ENCODE measurements at regions of chr6 and their contacts with region 1.

Region 1: DNA sequence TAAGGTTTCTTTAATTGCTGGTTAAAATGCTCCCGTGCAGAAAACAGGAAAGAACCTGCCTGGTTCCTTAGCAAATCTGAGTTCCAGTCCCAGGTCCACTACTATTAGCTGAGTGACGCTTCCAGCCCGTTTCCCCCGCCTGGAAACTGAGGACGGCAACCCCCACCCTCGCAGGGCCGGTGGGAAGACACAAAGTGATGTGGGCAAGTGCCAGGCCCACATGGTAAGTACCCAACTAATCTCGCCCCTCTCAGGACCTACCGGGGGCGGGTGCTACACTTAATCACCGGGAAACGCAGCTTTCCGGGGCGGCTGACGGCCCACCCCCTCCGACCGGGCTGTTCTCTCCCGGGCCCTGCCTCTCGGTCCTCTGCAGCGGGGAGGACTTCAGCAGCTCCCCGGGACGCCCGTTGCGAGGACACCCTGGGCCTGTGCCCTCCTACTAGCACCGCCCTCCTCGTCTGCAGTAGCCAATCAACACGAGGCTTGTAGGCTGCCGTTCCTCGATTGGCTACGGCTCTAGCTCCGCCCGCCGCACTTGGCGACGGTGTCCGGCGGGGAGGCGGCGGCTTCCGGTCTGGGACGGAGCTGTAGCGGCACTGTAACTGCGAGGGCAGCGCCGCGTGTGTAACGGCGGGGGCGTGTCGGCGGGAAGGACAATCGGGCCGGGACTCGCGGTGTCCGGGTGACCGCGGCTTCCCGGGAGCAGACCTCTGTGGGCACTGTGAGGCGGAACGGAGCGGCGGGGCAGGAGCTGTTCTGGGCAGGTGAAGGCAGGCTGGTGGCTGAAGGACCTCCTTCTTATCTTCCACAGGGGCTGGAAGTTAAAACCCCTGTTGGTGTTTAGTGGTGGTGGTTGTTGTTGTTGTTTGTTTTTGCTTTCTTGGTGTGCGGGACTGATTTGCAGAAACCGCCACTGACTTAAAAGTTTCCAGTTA is at the start of gene ZBTB9:
- H3K4me3 ChIP-seq: peak within 1 kb of the TSS; percentile 54
- H3K27ac ChIP-seq: peak within 1 kb of the TSS; percentile 65; the same call in 1 of the 2 replicates
- H3K4me1 ChIP-seq: 0 out of 2 replicates have a peak, but pooled peaks cover 3% of the 10 kb centered on the region
- CTCF ChIP-seq: peak; percentile 24; the same call in 1 of the 2 replicates

Region 2: DNA sequence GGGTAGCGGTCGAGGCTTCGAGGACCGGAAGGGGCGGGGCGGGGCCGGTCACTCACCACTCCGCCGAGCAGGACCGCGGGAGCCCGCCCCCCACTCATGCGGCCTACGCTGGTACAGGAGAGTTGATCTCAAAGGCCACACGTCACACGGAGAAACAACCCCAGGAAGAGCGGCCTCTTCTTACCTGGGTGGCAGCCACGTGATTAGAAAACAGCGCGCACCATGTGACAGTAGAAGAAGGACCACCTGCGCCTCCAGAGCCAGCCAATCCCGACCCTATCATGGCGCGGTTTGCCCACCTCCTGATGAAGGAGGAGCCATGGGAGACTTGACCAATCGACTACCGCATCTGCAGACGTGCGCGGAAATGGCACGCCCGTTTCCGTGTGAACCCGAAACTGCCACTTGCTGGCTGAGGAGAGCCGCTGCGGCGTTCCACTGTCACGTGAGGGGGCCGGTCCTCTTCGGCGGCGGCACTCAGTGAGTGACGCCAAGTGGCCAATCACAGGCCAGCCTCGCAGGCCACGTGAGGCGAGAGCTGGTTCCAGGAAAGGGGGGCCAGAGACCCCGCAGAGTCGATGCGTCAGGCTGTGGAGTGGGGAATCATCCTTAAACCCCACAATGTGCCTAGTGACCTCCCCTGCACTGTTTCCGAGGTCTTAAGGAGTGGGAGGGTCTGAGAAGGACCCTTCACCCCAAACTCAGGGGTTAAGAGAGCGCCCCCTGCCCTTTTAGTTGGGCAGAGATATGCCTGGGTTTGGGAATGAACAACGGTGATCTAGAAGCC is 36.2 kb before region 1 on chr6 and contains the start of gene CUTA:
- CTCF ChIA-PET with region 1: interaction called, 3 read pairs
- POLR2A ChIA-PET with region 1: interaction called, 14 read pairs
- H3K4me3 ChIP-seq: peak within 1 kb of the TSS; percentile 46
- H3K27ac ChIP-seq: peak within 1 kb of the TSS; percentile 67
- H3K4me1 ChIP-seq: no peaks in the 10 kb centered on the region
- CTCF ChIP-seq: peak; percentile 90

Region 3: GRCh38 chr6:33425668-33426577 is 28.4 kb before region 1 on chr6:
- CTCF ChIA-PET with region 1: interaction called, 3 read pairs
- POLR2A ChIA-PET with region 1: interaction called, 20 read pairs
- H3K4me3 ChIP-seq: peak overlapping the region; percentile 69
- H3K27ac ChIP-seq: peak overlapping the region; percentile 80
- H3K4me1 ChIP-seq: peaks cover 7% of the 10 kb centered on the region
- CTCF ChIP-seq: peak; percentile 44

Region 4: GRCh38 chr6:33430991-33431879 is 23.0 kb before region 1 on chr6:
- CTCF ChIA-PET with region 1: interaction called, 4 read pairs
- POLR2A ChIA-PET with region 1: interaction called, 20 read pairs
- H3K4me3 ChIP-seq: no peak overlapping the region
- H3K27ac ChIP-seq: no peak overlapping the region
- H3K4me1 ChIP-seq: peaks cover 10% of the 10 kb centered on the region
- CTCF ChIP-seq: no peak

Region 5: DNA sequence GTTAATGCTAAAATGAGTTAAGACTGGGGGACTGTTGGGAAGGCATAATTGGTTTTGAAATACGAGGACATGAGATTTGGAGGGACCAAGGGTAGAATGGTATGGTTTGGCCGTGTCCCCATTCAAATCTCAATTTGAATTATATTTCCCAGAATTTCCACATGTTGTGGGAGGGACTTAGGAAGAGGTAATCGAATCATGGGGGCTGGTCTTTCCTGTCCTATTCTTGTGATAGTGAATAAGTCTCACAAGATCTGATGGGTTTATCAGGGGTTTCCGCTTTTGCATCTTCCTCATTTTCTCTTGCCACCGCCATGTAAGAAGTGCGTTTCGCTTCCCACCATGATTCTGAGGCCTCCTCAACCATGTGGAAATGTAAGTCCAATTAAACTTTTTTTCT is 12.8 kb after region 1 on chr6:
- CTCF ChIA-PET with region 1: interaction called, 6 read pairs
- POLR2A ChIA-PET with region 1: interaction called, 11 read pairs
- H3K4me3 ChIP-seq: no peak overlapping the region
- H3K27ac ChIP-seq: no peak overlapping the region
- H3K4me1 ChIP-seq: no peaks in the 10 kb centered on the region
- CTCF ChIP-seq: no peak

Region 6: GRCh38 chr6:33570806-33571636 is 116.7 kb after region 1 on chr6:
- CTCF ChIA-PET with region 1: no interaction called
- POLR2A ChIA-PET with region 1: interaction called, 18 read pairs
- H3K4me3 ChIP-seq: peak overlapping the region; percentile 52
- H3K27ac ChIP-seq: peak overlapping the region; percentile 48
- H3K4me1 ChIP-seq: peaks cover 3% of the 10 kb centered on the region; the same call in 1 of the 2 replicates
- CTCF ChIP-seq: peak; percentile 49

Region 7: DNA sequence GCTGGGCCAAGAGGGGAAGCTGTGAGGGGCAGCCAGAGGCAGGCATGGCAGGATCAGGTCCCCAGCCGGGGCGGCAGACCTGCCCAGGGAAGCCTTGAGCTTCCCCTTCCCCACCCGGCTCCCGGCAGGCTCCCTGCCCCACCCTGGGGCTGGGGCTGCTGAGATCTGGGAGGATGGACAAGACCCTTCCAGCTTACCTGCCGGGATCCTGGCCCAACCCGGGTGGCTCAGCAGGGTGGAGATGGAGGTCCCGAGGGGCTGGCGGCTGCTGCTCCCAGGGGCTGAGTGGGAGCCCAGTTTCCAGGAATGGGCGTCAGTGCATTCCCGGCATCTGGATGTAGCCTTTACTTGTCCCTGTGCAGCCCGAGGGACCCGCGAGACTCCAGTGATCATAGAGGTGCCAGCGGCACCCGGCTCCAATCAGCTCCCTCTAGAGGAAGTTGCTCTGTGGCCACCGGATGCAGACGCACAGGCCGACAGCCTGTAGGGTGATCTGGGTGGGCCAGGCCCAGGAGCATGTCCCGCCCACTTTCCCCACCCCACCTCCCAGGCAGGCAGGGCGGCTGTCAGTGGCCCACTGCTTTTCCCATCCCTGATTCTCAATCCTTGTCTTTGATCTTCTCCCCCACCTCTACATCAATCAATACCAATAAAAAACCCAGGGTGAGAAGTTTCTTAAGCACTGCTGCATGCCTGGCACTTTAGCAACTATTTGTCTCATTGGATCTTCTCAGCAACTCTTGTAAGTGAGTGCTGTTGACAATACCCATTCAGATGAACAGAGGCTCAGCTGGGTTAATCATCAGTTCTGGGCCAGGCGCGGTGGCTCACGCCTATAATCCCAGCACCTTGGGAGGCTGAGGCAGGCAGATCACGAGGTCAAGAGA is 125.8 kb after region 1 on chr6 and contains the start of gene BAK1:
- CTCF ChIA-PET with region 1: interaction called, 4 read pairs
- POLR2A ChIA-PET with region 1: interaction called, 18 read pairs
- H3K4me3 ChIP-seq: peak within 1 kb of the TSS; percentile 90
- H3K27ac ChIP-seq: peak within 1 kb of the TSS; percentile 71; the same call in 1 of the 2 replicates
- H3K4me1 ChIP-seq: no peaks in the 10 kb centered on the region; the same call in 1 of the 2 replicates
- CTCF ChIP-seq: peak; percentile 89